ENCODE measurements at regions of chr15 and their contacts with region 1.

Region 1: DNA sequence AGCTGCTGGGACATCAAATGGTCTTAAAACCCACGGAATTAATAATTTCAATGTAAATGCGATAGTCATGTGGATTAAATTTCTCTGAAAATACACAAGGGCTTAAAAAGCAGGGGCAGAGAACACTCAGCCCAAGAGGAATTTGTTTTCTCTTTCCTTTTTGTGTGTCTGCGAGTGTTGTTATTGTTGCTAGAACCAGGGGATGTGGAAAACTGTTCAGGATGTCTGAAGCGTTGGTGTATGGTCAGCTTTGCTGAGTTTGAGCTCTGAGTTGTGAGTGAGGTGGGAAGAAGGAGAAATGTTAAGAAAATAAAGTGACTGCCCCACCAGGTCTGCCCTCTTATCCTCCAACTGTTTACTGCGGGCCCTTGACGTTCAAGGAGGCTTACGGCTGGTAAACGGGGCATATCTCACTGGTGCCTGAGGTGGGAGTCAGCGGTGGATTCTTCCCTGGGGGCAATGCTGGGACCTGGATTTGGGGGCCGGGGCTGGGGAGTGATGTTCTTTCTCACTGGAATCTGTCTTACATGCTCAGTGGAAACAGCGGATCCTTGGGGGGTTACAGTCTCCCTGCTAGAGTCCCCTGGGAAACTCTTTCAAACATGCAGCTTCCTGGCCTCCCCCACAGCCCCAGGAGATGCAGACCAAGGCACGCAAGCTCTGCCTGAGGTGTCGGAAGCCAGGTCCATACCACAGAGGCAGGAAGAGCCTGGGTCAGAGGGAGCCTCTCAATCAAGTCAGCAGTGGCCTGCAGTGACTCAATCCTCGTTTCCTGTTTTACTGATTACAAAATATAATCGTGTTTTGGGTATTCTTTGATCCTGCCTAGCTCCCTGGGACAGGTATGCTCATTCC is 41.8 kb downstream of the ITGA11 start:
- DNase-seq: peak; percentile 77
- H3K4me3 Mint-ChIP-seq: peak overlapping the region; percentile 16
- H3K27ac Mint-ChIP-seq: peak overlapping the region; percentile 52
- H3K4me1 Mint-ChIP-seq: peaks cover 16% of the 10 kb centered on the region
- H3K27me3 Mint-ChIP-seq: peaks cover 27% of the 10 kb centered on the region

Region 2: DNA sequence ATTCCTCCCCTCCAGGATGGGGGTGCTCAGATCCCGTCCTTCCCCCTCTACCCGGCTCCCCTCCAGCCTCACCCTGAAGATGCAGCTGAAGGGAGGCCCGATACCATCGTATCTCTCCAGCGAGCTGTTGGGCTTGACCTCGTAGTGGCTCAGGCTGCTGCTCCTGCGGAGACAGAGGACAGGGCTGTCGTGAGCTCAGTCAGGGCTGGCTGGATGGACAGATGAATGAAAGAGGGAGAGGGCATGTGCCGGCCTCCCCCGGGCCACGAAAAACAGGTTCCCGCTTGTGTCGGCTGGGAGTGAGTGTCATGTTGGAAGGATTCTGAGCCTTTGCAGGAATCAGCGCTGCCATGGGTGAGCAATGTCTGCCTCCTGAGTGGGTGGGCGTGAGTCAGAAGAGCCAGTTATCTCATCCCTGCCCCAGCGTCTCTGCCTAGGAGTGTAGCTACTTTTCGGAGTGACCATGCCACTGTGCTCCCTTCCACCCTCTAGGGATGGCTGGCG is 77.4 kb before region 1 on chr15:
- intact Hi-C with region 1: no loop called
- DNase-seq: no peak
- H3K4me3 Mint-ChIP-seq: no peak overlapping the region
- H3K27ac Mint-ChIP-seq: no peak overlapping the region
- H3K4me1 Mint-ChIP-seq: no peaks in the 10 kb centered on the region
- H3K27me3 Mint-ChIP-seq: peaks cover 3% of the 10 kb centered on the region

Region 3: DNA sequence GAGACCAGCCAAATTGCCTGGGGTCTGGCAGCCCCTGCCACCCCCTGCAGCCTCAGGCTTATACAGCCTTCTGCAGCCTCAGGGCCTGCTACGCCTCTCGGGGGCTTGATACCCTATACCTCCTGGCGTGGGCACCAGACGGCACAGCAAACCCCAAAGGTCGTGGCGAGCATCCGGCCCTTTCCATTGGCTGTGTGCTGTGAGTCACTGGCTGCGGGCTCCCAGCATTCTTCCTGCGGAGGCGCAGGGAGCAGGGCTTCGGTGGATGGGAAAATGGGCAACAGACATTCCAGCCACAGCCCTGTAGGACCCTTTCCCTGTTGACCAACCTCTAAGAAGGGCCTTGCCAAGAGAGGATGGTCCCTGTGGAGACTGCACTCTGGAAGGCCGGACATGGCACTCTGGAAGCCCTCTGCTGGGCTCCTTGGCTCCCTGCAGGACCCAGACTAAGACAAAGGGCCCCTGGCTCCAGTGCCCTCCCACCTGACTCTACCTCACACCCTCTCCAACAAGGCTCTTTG is 17.8 kb before region 1 on chr15:
- intact Hi-C with region 1: no loop called
- DNase-seq: no peak
- H3K4me3 Mint-ChIP-seq: no peak overlapping the region
- H3K27ac Mint-ChIP-seq: no peak overlapping the region
- H3K4me1 Mint-ChIP-seq: peaks cover 3% of the 10 kb centered on the region
- H3K27me3 Mint-ChIP-seq: peaks cover 2% of the 10 kb centered on the region

Region 4: GRCh38 chr15:68526269-68526668 is 136.1 kb after region 1 on chr15:
- intact Hi-C with region 1: loop called (anchors 10 kb)
- DNase-seq: no peak
- H3K4me3 Mint-ChIP-seq: no peak overlapping the region
- H3K27ac Mint-ChIP-seq: no peak overlapping the region
- H3K4me1 Mint-ChIP-seq: peaks cover 25% of the 10 kb centered on the region
- H3K27me3 Mint-ChIP-seq: peaks cover 27% of the 10 kb centered on the region

Measured in activated CD4-positive, alpha-beta T cell treated with anti-CD3 and anti-CD28 coated beads, Interleukin-2, amount 10 ng/mL, durations not matched to agents 24 days and 14 days (primary cell).